ENCODE measurements at regions of chr3 and their contacts with region 1.

Region 1: DNA sequence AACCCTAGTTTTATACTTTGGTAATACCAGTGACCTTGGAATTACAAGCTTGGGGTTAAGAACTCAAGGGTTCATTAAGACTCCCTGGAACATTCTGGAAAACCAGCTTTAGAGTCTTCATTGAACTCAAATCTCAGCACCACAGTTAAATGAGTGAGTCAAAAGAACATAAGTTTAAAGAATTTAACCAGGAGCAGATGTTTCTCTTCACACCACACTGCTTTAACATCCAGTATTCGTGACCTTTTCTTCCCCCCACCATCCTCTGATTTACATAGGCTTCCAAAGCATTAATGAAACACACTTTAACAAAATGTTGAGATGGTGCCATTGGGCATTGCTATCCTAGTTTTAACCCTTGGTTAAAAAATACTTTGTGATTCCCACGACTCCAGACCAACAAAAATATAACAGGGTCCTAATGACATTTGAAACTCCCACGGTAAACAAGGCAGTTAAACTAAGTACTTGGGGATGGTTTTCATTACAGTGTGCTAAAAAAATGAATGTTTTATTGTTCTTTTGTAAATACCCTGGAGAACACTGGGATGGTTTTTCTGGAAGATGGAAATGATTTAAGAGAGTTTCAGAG is 123.9 kb downstream of the OXNAD1 start:
- DNase-seq: no peak
- H3K4me3 Mint-ChIP-seq: no peak overlapping the region
- H3K27ac Mint-ChIP-seq: no peak overlapping the region
- H3K4me1 Mint-ChIP-seq: peaks cover 33% of the 10 kb centered on the region
- H3K27me3 Mint-ChIP-seq: no peaks in the 10 kb centered on the region

Region 2: GRCh38 chr3:16423947-16424673 is 35.2 kb after region 1 on chr3:
- intact Hi-C with region 1: loop called (anchors 5 kb)
- DNase-seq: no peak
- H3K4me3 Mint-ChIP-seq: no peak overlapping the region
- H3K27ac Mint-ChIP-seq: no peak overlapping the region
- H3K4me1 Mint-ChIP-seq: peaks cover 9% of the 10 kb centered on the region
- H3K27me3 Mint-ChIP-seq: no peaks in the 10 kb centered on the region

Region 3: GRCh38 chr3:16482770-16483531 is 94.0 kb after region 1 on chr3:
- intact Hi-C with region 1: loop called (anchors 5 kb)
- DNase-seq: peak; percentile 81
- H3K4me3 Mint-ChIP-seq: peak overlapping the region; percentile 69
- H3K27ac Mint-ChIP-seq: peak overlapping the region; percentile 69
- H3K4me1 Mint-ChIP-seq: peaks cover 72% of the 10 kb centered on the region
- H3K27me3 Mint-ChIP-seq: no peaks in the 10 kb centered on the region